ENCODE measurements at regions of chr13 and their contacts with region 1.

Region 1: DNA sequence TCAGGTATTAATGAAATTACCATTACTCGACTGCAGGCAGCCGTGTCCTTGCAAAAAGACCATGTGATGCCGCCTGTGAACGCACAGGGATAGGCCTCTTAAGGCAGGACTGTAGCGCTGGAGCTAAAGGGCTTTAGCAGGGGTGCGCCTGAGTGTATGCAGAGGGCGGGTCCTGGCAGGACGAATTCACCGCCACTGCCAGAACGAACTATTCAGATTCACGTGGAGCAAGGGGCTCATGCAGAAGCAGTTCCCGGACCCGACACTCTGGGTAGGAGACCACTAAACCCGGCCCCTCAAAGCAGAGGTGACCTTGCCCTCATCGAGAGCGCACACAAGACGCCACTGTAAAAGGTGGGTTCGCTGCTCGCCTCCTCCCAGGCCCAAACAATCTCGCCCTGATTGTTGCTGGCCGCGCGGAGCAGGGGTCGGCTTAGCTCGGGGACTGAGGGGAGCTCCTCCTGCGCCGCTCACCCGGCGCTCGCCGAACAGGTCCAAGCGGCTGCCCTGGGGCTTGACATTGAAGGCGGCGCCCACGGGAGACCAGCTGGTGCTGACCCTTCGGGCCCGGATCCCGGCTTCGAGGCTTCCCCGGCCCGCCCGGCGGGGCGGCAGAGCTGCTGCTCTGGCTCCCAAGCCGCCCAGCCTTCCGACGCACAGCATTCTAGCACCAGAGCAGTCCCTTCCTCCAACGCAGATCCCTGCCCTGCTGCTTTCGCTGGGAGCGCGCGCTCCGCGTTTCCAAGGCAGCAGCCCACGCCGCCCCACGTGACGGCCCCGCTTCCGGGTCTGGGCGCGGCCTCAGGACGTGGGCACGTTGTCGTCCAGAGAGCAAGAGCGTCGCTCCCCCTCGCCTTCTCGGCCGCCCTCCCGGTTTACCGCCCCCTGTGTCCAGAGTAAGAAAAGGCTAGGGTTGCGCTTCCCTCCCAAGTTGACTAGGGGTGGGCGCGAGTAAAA is at the start of gene MIPEP:
- DNase-seq: peak; percentile 94
- H3K4me3 ChIP-seq: peak within 1 kb of the TSS; percentile 77 to 92
- H3K27ac ChIP-seq: peak within 1 kb of the TSS; percentile 76 to 91
- H3K4me1 ChIP-seq: peaks cover 0 to 7% of the 10 kb centered on the region in 2 experiments; a peak in 2 of 4 replicates
- H3K27me3 ChIP-seq: no peaks in the 10 kb centered on the region
- CTCF ChIP-seq: peak; percentile 81
- EP300 ChIP-seq: no peak; a peak in 1 of 4 replicates
- RAD21 ChIP-seq: no peak
- polyA plus RNA-seq, gene MIPEP: 10.4 and 12.7 TPM in 2 replicates

Region 2: DNA sequence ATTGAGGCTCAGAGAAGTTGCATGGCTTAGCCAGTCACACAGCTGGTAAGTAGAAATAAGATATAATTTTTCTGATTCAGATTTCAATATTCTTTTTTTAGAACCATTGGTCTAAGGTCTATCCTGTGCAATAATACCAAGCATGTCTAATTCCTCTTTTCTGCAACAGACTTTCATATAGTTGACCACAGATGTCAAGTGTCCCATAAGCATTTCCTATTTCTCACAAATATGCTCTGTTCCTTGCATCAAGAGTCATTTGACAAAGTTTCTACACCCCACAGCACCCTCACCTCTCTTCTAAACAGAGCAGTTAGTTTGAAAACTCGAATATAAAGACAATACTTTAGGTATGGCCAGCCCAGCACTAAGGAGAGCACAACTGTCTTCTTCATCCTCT is 428.6 kb before region 1 on chr13:
- CTCF ChIA-PET with region 1: interaction called, 13 read pairs
- POLR2A ChIA-PET with region 1: interaction called, 3 read pairs
- DNase-seq: no peak
- H3K4me3 ChIP-seq: no peak overlapping the region
- H3K27ac ChIP-seq: no peak overlapping the region
- H3K4me1 ChIP-seq: peaks cover 6 to 7% of the 10 kb centered on the region in 2 experiments; a peak in 2 of 4 replicates
- H3K27me3 ChIP-seq: no peaks in the 10 kb centered on the region
- CTCF ChIP-seq: no peak
- EP300 ChIP-seq: no peak
- RAD21 ChIP-seq: no peak

Region 3: GRCh38 chr13:23466144-23467002 is 422.6 kb before region 1 on chr13:
- CTCF ChIA-PET with region 1: interaction called, 37 read pairs
- POLR2A ChIA-PET with region 1: interaction called, 3 read pairs
- DNase-seq: peak; percentile 82
- H3K4me3 ChIP-seq: peak overlapping the region; percentile 21 to 48; a peak in 3 of 4 replicates
- H3K27ac ChIP-seq: peak overlapping the region; percentile 65
- H3K4me1 ChIP-seq: peaks cover 6 to 20% of the 10 kb centered on the region in 2 experiments; a peak in 2 of 4 replicates
- H3K27me3 ChIP-seq: no peaks in the 10 kb centered on the region
- CTCF ChIP-seq: peak; percentile 71
- EP300 ChIP-seq: no peak
- RAD21 ChIP-seq: peak; percentile 83

Region 4: GRCh38 chr13:23871616-23872220 is 17.2 kb before region 1 on chr13:
- CTCF ChIA-PET with region 1: interaction called, 11 read pairs
- POLR2A ChIA-PET with region 1: no interaction called
- DNase-seq: peak; percentile 46
- H3K4me3 ChIP-seq: no peak overlapping the region
- H3K27ac ChIP-seq: 0 out of 4 replicates have a peak overlapping the region, but pooled peaks of 1 of the 2 experiments have one; percentile 11
- H3K4me1 ChIP-seq: peaks cover 2 to 6% of the 10 kb centered on the region in 2 experiments; a peak in 1 of 4 replicates
- H3K27me3 ChIP-seq: no peaks in the 10 kb centered on the region
- CTCF ChIP-seq: peak; percentile 70
- EP300 ChIP-seq: no peak
- RAD21 ChIP-seq: peak; percentile 84

Region 5: GRCh38 chr13:23899555-23899954 is 10.6 kb after region 1 on chr13:
- CTCF ChIA-PET with region 1: interaction called, 16 read pairs
- POLR2A ChIA-PET with region 1: no interaction called
- DNase-seq: peak; percentile 36
- H3K4me3 ChIP-seq: no peak overlapping the region
- H3K27ac ChIP-seq: no peak overlapping the region
- H3K4me1 ChIP-seq: peaks cover 0 to 3% of the 10 kb centered on the region in 2 experiments; a peak in 1 of 4 replicates
- H3K27me3 ChIP-seq: no peaks in the 10 kb centered on the region
- CTCF ChIP-seq: peak; percentile 49
- EP300 ChIP-seq: no peak
- RAD21 ChIP-seq: peak; percentile 67

Region 6: DNA sequence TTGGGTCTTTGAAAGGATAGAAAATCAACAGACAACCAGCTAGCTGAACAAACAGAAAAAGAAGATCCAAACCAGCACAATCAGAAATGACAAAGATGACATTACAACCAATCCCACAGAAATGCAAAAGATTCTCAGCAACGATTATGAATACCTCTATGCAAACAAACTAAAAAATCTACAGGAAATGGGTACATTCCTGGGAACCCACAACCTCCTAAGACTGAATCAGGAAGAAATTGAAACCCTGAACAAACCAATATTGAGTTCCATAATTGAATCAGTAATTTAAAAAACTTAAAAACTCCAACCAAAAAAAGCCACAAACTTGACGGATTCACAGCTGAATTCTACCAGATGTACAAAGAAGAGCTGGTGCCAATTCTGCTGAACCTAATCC is 29.3 kb after region 1 on chr13:
- CTCF ChIA-PET with region 1: no interaction called
- POLR2A ChIA-PET with region 1: no interaction called
- DNase-seq: no peak
- H3K4me3 ChIP-seq: no peak overlapping the region
- H3K27ac ChIP-seq: no peak overlapping the region
- H3K4me1 ChIP-seq: no peaks in the 10 kb centered on the region
- H3K27me3 ChIP-seq: no peaks in the 10 kb centered on the region
- CTCF ChIP-seq: no peak
- EP300 ChIP-seq: peak in 1 of 2 experiments; percentile 33; a peak in 1 of 4 replicates
- RAD21 ChIP-seq: no peak

Measured in SK-N-SH (cell line).